Common myeloid progenitor, CD34-positive (primary cell): ENCODE measurements at regions of chr1 and their contacts with region 1.

Region 1: GRCh38 chr1:171984850-171985485 is 143.7 kb downstream of the DNM3 start:
- DNase-seq: peak; percentile 46 to 56 (median 49)
- H3K4me3 ChIP-seq: no peak overlapping the region
- H3K27ac ChIP-seq: no peak overlapping the region
- H3K4me1 ChIP-seq: peaks cover 0 to 10% (median 0%) of the 10 kb centered on the region in 4 experiments
- H3K27me3 ChIP-seq: no peaks in the 10 kb centered on the region

Region 2: DNA sequence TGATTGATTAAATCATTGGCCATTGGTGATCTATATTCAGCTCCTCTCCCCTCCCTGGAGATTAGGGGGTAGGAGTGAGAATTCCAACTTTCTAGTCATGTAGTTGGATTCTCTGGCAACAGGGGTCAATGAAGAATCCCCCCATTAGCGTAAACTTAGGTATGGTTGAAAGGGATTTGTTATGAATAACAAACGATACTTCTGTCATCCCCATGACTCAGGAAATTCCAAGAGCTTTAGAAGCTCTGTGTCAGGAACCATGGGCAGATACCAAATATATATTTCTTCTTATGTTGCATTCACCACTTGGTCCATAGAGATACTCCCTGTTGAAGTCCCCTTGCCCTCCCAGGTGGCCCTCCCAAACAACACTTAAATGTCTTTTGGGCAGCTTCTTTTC is 19.2 kb before region 1 on chr1:
- CTCF ChIA-PET with region 1: interaction called, 26 read pairs
- POLR2A ChIA-PET with region 1: no interaction called
- DNase-seq: no peak
- H3K4me3 ChIP-seq: no peak overlapping the region
- H3K27ac ChIP-seq: no peak overlapping the region
- H3K4me1 ChIP-seq: peaks cover 20 to 50% (median 27%) of the 10 kb centered on the region in 4 experiments
- H3K27me3 ChIP-seq: no peaks in the 10 kb centered on the region